Calu3 (cell line): ENCODE measurements at regions of chr21 and their contacts with region 1.

Region 1: GRCh38 chr21:42250422-42251403 is 31.8 kb downstream of the ABCG1 start:
- DNase-seq: no peak
- H3K4me3 Mint-ChIP-seq: no peak overlapping the region
- H3K27ac Mint-ChIP-seq: no peak overlapping the region
- H3K4me1 Mint-ChIP-seq: no peaks in the 10 kb centered on the region
- H3K27me3 Mint-ChIP-seq: peaks cover 79% of the 10 kb centered on the region
- CTCF ChIP-seq: no peak

Region 2: GRCh38 chr21:42227909-42228708 is 22.6 kb before region 1 on chr21:
- CTCF ChIA-PET with region 1: no interaction called
- intact Hi-C with region 1: loop called (anchors 1 kb)
- DNase-seq: peak; percentile 71
- H3K4me3 Mint-ChIP-seq: no peak overlapping the region
- H3K27ac Mint-ChIP-seq: no peak overlapping the region
- H3K4me1 Mint-ChIP-seq: no peaks in the 10 kb centered on the region
- H3K27me3 Mint-ChIP-seq: peaks cover 47% of the 10 kb centered on the region
- CTCF ChIP-seq: no peak

Region 3: GRCh38 chr21:42276526-42277154 is 25.9 kb after region 1 on chr21:
- CTCF ChIA-PET with region 1: no interaction called
- intact Hi-C with region 1: loop called (anchors 1 kb)
- DNase-seq: no peak
- H3K4me3 Mint-ChIP-seq: no peak overlapping the region
- H3K27ac Mint-ChIP-seq: no peak overlapping the region
- H3K4me1 Mint-ChIP-seq: no peaks in the 10 kb centered on the region
- H3K27me3 Mint-ChIP-seq: peaks cover 31% of the 10 kb centered on the region
- CTCF ChIP-seq: no peak

Region 4: DNA sequence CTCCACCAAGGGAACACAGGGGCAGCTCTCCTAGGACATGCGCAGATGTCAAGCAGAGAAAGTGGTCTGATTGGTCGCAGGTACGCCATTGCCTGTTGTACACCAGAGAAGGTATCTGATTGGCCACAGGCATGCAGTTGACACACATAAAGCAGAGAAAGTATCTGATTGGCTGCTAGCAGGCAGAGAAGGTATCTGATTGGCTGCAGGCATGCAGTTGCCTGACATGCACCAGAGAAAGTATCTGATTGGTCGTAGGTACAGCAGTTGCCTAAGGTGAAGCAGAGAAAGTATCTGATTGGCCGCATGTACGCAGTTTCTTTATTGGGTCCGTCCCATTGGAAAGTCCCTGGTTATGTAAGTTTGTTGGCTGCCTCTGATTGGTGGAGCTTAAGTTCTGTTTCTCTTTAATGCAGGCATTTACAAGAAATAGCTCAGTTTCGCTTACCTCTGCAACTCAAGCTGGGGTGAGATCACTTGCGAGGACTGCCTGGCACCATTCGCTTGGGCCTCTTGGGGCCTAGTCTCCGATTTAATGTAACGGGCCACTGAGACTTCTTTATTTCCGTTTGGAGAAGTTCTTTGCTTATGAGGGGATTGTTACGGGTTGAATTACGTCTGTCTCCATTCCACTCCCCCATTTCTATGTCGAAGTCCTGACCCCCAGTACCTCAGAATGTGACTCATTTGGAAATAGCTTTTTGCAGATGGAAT is 1102.0 kb after region 1 on chr21:
- CTCF ChIA-PET with region 1: no interaction called
- intact Hi-C with region 1: no loop called
- DNase-seq: no peak
- H3K4me3 Mint-ChIP-seq: no peak overlapping the region
- H3K27ac Mint-ChIP-seq: no peak overlapping the region
- H3K4me1 Mint-ChIP-seq: no peaks in the 10 kb centered on the region
- H3K27me3 Mint-ChIP-seq: no peaks in the 10 kb centered on the region
- CTCF ChIP-seq: no peak